Heart right ventricle (tissue), 16 donors: ENCODE measurements at regions of chr7 and their contacts with region 1.

Region 1: GRCh38 chr7:86243157-86243556 is 400.6 kb upstream of the GRM3 start:
- DNase-seq: no peak
- ATAC-seq: no peak
- H3K4me3 ChIP-seq: no peak overlapping the region
- H3K27ac ChIP-seq: no peak overlapping the region
- H3K4me1 ChIP-seq: no peaks in the 10 kb centered on the region
- H3K27me3 ChIP-seq: no peaks in the 10 kb centered on the region
- CTCF ChIP-seq: no peak

Region 2: GRCh38 chr7:86049910-86050309 is 193.2 kb before region 1 on chr7:
- intact Hi-C with region 1: loop called in 1 of 10 experiments (anchors 10 kb)
- DNase-seq: no peak
- ATAC-seq: no peak
- H3K4me3 ChIP-seq: no peak overlapping the region
- H3K27ac ChIP-seq: no peak overlapping the region
- H3K4me1 ChIP-seq: no peaks in the 10 kb centered on the region
- H3K27me3 ChIP-seq: no peaks in the 10 kb centered on the region
- CTCF ChIP-seq: no peak